ENCODE measurements at regions of chr3 and their contacts with region 1.

Region 1: DNA sequence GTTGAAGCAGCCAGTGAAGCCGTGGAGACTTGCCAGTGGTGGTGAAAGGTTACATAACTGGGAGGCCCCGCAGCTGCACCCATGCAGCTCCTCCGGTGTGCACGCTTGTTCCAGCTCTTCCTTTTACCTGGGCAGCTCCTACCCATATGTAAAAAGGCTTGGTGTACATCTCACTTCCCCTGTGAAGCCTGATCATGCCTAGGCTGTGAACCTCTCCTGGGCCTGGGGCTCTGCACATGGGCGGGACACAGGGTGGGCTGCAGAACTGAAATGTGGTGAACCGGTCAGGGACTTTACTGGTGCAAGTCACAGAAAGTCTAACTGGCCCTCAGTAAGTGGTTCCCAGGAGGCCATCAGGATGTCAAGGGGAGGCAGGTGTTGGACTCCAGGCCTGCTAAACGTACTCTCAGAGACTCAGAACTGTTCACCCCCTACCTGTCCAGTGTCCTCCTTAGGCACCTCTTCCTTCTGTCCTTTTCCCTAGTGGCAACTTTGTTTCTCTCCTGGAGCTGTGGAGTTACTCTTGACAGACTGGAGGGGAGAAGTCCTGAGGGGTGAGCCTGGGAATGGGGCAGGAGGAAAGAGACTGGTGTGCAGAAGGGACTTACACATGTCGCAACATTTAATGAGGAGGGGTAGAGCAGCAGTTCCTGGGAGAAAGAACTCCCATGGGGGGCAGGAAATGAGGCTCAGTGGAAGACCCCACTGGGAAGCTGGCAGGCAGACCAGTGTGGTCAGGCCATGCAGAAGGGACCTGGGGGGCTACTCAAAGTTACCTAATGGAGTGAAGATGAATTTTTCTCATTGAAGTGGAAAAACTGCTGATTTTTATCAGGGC is 148.1 kb downstream of the EEFSEC start:
- DNase-seq: no peak
- ATAC-seq: no peak
- H3K4me3 ChIP-seq: no peak overlapping the region
- H3K27ac ChIP-seq: no peak overlapping the region
- H3K4me1 ChIP-seq: no peaks in the 10 kb centered on the region
- H3K27me3 ChIP-seq: no peaks in the 10 kb centered on the region
- CTCF ChIP-seq: no peak
- POLR2A ChIP-seq: no peak
- RAD21 ChIP-seq: no peak

Region 2: GRCh38 chr3:127768346-127769008 is 532.9 kb before region 1 on chr3:
- CTCF ChIA-PET with region 1: no interaction called
- POLR2A ChIA-PET with region 1: no interaction called
- dilution Hi-C with region 1: no loop called
- in situ Hi-C with region 1: no loop called
- intact Hi-C with region 1: no loop called
- DNase-seq: peak; percentile 99
- ATAC-seq: peak; percentile 87
- H3K4me3 ChIP-seq: no peak overlapping the region
- H3K27ac ChIP-seq: peak overlapping the region; percentile 99
- H3K4me1 ChIP-seq: peaks cover 30% of the 10 kb centered on the region
- H3K27me3 ChIP-seq: no peaks in the 10 kb centered on the region
- CTCF ChIP-seq: peak; percentile 19
- POLR2A ChIP-seq: no peak
- RAD21 ChIP-seq: peak; percentile 33; the same call in 1 of the 2 replicates

Region 3: DNA sequence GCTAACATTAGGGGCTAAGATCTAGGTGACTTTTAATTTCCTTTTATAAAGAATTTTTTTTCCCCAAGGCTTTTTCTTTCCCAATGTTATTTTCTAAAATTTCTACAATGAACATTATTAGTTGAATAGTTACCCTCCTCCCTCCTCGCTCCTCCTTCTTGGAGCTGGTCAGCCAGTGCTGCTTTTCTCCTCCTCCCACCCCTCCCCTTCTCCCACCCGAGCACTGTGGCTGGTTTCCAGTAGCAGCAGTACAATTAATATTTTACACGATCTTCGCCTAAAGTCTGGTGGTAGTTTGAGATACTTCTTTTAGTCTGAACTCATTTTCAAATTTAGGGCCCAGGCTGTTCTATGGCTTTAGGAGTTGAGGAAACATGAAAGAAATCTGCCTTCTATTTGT is 106.6 kb before region 1 on chr3:
- CTCF ChIA-PET with region 1: no interaction called
- POLR2A ChIA-PET with region 1: no interaction called
- dilution Hi-C with region 1: no loop called
- in situ Hi-C with region 1: no loop called
- intact Hi-C with region 1: loop called (anchors 5 kb)
- DNase-seq: no peak
- ATAC-seq: peak; percentile 79
- H3K4me3 ChIP-seq: no peak overlapping the region
- H3K27ac ChIP-seq: peak overlapping the region; percentile 50; the same call in 1 of the 2 replicates
- H3K4me1 ChIP-seq: peaks cover 10% of the 10 kb centered on the region; the same call in 1 of the 2 replicates
- H3K27me3 ChIP-seq: no peaks in the 10 kb centered on the region
- CTCF ChIP-seq: no peak
- POLR2A ChIP-seq: no peak
- RAD21 ChIP-seq: no peak

Region 4: DNA sequence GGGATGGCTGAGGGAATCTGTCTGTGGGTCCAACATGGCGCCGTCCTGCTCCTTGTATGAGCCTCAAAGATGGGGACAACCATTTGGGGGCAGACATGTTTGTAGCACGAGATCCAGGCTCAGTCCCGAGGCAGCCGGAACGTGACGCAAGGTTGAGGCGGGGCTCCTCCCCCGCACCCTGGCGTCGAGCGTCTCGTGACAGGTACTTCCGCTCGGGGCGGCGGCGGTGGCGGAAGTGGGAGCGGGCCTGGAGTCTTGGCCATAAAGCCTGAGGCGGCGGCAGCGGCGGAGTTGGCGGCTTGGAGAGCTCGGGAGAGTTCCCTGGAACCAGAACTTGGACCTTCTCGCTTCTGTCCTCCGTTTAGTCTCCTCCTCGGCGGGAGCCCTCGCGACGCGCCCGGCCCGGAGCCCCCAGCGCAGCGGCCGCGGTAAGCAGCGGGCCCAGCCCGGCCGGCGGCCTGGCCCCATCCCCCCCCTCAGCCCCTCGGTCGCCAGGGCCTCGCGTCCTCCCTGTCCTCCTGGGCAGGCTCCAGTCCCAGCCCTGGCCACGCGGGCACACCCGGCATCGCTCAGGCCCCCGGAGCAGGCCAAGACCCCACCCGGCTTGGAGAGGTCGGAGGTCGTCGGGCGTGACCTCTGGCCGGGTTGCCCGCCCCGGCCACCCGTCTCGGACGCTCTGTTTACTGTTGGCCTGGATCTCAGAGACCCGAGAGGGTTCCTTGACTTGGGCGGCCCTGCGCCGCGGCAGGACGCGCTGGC is 424.7 kb after region 1 on chr3 and contains the start of gene RAB7A:
- CTCF ChIA-PET with region 1: no interaction called
- POLR2A ChIA-PET with region 1: no interaction called
- dilution Hi-C with region 1: no loop called
- in situ Hi-C with region 1: no loop called
- intact Hi-C with region 1: no loop called
- DNase-seq: peak; percentile 98
- ATAC-seq: peak; percentile 92
- H3K4me3 ChIP-seq: peak within 1 kb of the TSS; percentile 66
- H3K27ac ChIP-seq: peak within 1 kb of the TSS; percentile 76
- H3K4me1 ChIP-seq: peaks cover 11% of the 10 kb centered on the region
- H3K27me3 ChIP-seq: peaks cover 5% of the 10 kb centered on the region; the same call in 1 of the 2 replicates
- CTCF ChIP-seq: no peak
- POLR2A ChIP-seq: peak; percentile 98
- RAD21 ChIP-seq: no peak
- total RNA-seq, gene RAB7A: 57.0 and 65.3 TPM in 2 replicates